Activated T-helper 1 cell treated with anti-CD3 and anti-CD28 coated beads, Interleukin-12 subunit alpha, Interleukin-12 subunit beta, Interleukin-2, Interleukin-4 antibody, amounts not matched to agents 30 ng/mL and 10 ng/mL and 1 ng/mL, durations not matched to agents 14 hours and 24 hours and 36 hours (primary cell): ENCODE measurements at regions of chr10 and their contacts with region 1.

Region 1: DNA sequence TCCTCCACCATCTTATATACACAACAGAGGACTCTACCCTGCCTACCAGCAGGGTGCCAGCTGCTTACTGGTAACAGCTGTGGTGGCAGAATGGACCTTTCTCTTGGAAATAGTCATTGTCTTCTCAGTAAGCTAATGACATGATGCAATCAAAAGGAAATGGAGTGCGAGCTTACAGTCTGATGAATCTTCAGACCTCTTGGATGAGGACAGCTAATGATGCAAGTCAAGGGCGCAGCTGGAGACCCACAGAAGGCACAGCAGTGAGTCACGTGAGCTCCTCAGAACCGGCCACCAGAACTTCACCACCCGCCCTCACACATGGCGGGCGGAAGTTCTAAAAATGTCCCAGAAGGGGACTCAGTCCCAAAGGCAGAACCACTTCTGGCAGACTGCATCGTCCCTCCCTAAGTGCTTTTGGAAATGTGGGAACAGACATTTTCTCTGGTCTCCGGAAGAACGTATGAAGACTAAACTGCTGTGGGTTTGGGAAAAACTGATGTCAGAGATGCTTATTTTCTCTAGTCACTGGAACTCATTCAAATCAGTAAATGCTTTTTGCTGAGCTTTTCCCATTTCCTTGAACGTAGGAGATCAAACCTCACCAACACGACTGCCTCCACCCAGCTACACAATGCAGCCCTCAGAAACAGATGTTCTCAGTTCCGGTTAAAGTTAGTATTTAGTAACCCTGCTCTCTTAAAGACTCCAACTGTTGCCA is 96.4 kb downstream of the FAS start:
- DNase-seq: no peak
- H3K4me3 Mint-ChIP-seq: no peak overlapping the region
- H3K27ac Mint-ChIP-seq: no peak overlapping the region
- H3K4me1 Mint-ChIP-seq: peaks cover 9% of the 10 kb centered on the region
- H3K27me3 Mint-ChIP-seq: peaks cover 15% of the 10 kb centered on the region

Region 2: DNA sequence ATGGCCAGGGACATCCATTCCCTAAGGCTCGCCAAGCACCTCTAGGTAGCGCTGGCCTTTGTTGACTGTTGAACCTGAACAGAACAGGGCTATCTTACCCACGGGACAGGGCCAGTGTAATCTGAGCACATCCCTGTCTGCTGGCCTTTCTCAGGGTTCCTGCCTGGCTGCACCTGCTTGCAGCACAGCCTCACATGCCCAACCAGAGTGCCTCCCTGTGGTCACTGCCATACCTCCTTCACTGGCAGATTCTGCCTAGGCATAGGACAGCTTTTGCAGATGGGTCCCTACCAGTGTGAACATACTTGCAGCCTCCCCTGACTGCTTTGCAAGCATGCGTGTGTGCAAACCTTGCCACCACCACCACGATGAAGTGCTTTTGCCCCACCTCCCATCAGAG is 343.0 kb before region 1 on chr10:
- intact Hi-C with region 1: no loop called
- DNase-seq: no peak
- H3K4me3 Mint-ChIP-seq: no peak overlapping the region
- H3K27ac Mint-ChIP-seq: no peak overlapping the region
- H3K4me1 Mint-ChIP-seq: no peaks in the 10 kb centered on the region
- H3K27me3 Mint-ChIP-seq: peaks cover 20% of the 10 kb centered on the region

Region 3: GRCh38 chr10:88791924-88792323 is 295.0 kb before region 1 on chr10:
- intact Hi-C with region 1: loop called (anchors 1 kb)
- DNase-seq: no peak
- H3K4me3 Mint-ChIP-seq: no peak overlapping the region
- H3K27ac Mint-ChIP-seq: no peak overlapping the region
- H3K4me1 Mint-ChIP-seq: peaks cover 25% of the 10 kb centered on the region
- H3K27me3 Mint-ChIP-seq: peaks cover 16% of the 10 kb centered on the region

Region 4: DNA sequence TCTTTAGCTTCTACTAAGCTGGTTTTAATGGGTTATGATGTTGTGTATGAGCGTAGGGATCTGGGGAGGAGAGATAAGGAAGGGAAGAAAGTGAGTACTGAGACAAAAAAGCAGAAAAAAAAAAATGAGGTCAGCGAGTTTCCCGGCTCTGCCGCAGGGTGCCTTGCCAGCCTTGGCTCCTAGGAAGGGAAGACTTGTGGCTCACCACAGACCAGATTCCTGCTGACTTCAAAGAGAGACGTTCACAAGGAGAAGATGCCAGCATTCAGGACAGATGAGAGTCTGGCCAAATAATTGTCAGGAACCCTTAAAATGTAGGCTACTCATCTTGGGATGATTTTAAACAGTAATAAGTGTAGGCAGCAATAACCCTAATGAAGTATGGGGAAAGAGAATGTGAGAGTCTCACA is 107.8 kb before region 1 on chr10:
- intact Hi-C with region 1: no loop called
- DNase-seq: no peak
- H3K4me3 Mint-ChIP-seq: no peak overlapping the region
- H3K27ac Mint-ChIP-seq: no peak overlapping the region
- H3K4me1 Mint-ChIP-seq: peaks cover 22% of the 10 kb centered on the region
- H3K27me3 Mint-ChIP-seq: peaks cover 3% of the 10 kb centered on the region

Region 5: DNA sequence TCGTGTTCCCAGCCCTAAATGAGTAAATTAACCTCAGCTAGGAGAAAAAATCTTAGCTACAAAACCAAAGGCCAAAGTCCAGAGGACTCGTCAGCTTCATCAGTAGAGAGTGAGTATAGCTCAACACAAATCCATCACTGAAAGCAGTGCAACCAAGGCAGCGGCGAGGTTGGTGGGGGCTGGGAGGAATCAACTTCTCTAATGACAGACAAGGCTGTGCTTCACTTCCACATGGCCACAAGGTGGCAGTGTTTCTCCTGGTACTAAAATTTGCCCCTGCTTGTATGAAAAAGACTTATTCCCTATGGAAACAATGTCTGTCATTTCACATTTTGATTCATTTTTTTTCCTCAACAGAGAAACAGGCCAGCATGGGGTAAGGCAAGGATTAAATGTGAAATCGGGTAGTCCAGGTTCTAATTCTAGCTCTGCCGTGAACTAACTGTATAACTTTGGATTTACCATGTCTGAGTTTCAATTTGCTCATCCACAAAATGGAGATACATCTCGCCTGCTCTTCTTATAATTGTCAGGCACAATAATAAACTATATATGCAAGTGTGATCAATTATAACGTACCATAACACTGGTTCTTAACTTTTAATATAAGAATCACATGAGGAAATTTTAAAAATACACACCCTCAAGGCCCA is 57.0 kb before region 1 on chr10:
- intact Hi-C with region 1: loop called (anchors 1 kb)
- DNase-seq: peak; percentile 50
- H3K4me3 Mint-ChIP-seq: no peak overlapping the region
- H3K27ac Mint-ChIP-seq: no peak overlapping the region
- H3K4me1 Mint-ChIP-seq: peaks cover 31% of the 10 kb centered on the region
- H3K27me3 Mint-ChIP-seq: peaks cover 2% of the 10 kb centered on the region

Region 6: GRCh38 chr10:89207181-89207800 is 120.3 kb after region 1 on chr10 and contains the start of gene CH25H:
- intact Hi-C with region 1: loop called (anchors 2 kb)
- DNase-seq: peak; percentile 17
- H3K4me3 Mint-ChIP-seq: peak within 1 kb of the TSS; percentile 81
- H3K27ac Mint-ChIP-seq: peak within 1 kb of the TSS; percentile 61
- H3K4me1 Mint-ChIP-seq: peaks cover 11% of the 10 kb centered on the region
- H3K27me3 Mint-ChIP-seq: peaks cover 32% of the 10 kb centered on the region
- total RNA-seq, gene CH25H: not detected in 2 replicates

Region 7: GRCh38 chr10:89701238-89702120 is 614.5 kb after region 1 on chr10 and contains the start of gene KIF20B:
- intact Hi-C with region 1: loop called (anchors 1 kb)
- DNase-seq: peak; percentile 96
- H3K4me3 Mint-ChIP-seq: peak within 1 kb of the TSS; percentile 91
- H3K27ac Mint-ChIP-seq: peak within 1 kb of the TSS; percentile 95
- H3K4me1 Mint-ChIP-seq: peaks cover 63% of the 10 kb centered on the region
- H3K27me3 Mint-ChIP-seq: no peaks in the 10 kb centered on the region
- total RNA-seq, gene KIF20B: 48.7 TPM in 2 replicates